Psoas muscle (tissue), 8 donors: ENCODE measurements at regions of chr4 and their contacts with region 1.

Region 1: DNA sequence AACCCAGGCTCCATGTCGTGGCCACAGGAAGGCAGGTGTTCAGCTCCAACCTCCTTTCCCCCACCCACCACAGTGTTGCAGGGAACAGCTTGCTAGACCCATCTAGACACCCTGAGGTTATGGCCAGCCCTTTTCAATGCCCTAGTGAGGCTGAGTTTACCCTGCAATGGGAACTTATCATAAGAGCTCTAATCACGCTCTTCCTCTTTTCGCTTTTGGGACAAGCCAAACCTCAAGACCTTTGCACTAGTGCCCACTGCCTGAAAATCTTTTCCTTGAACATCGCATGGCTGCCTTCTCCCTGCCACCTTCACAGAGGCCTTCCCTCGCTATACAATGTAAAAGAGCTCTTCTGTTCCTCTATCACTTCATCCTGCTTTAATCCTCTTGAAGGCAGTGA is 2.4 kb upstream of the FGFBP2 start:
- DNase-seq: no peak
- ATAC-seq: no peak
- H3K4me3 ChIP-seq: no peak overlapping the region
- H3K27ac ChIP-seq: no peak overlapping the region
- H3K4me1 ChIP-seq: peaks cover 9% of the 10 kb centered on the region
- H3K27me3 ChIP-seq: no peaks in the 10 kb centered on the region
- CTCF ChIP-seq: no peak

Region 2: GRCh38 chr4:14289708-14290107 is 1675.6 kb before region 1 on chr4:
- intact Hi-C with region 1: no loop called
- DNase-seq: no peak
- ATAC-seq: no peak
- H3K4me3 ChIP-seq: no peak overlapping the region
- H3K27ac ChIP-seq: no peak overlapping the region
- H3K4me1 ChIP-seq: no peaks in the 10 kb centered on the region
- H3K27me3 ChIP-seq: no peaks in the 10 kb centered on the region
- CTCF ChIP-seq: no peak

Region 3: GRCh38 chr4:15920723-15921591 is 44.4 kb before region 1 on chr4:
- intact Hi-C with region 1: no loop called
- DNase-seq: peak in 1 of 2 donors; percentile 72
- ATAC-seq: peak; percentile 32 to 78 (median 68)
- H3K4me3 ChIP-seq: no peak overlapping the region
- H3K27ac ChIP-seq: no peak overlapping the region
- H3K4me1 ChIP-seq: no peaks in the 10 kb centered on the region
- H3K27me3 ChIP-seq: peaks cover 0 to 4% (median 0%) of the 10 kb centered on the region in 3 donors
- CTCF ChIP-seq: no peak

Region 4: GRCh38 chr4:16026160-16026761 is 60.9 kb after region 1 on chr4:
- intact Hi-C with region 1: no loop called
- DNase-seq: no peak
- ATAC-seq: peak in 1 of 4 donors; percentile 71
- H3K4me3 ChIP-seq: no peak overlapping the region
- H3K27ac ChIP-seq: no peak overlapping the region
- H3K4me1 ChIP-seq: no peaks in the 10 kb centered on the region
- H3K27me3 ChIP-seq: peaks cover 0 to 2% (median 0%) of the 10 kb centered on the region in 3 donors
- CTCF ChIP-seq: peak; percentile 93

Region 5: DNA sequence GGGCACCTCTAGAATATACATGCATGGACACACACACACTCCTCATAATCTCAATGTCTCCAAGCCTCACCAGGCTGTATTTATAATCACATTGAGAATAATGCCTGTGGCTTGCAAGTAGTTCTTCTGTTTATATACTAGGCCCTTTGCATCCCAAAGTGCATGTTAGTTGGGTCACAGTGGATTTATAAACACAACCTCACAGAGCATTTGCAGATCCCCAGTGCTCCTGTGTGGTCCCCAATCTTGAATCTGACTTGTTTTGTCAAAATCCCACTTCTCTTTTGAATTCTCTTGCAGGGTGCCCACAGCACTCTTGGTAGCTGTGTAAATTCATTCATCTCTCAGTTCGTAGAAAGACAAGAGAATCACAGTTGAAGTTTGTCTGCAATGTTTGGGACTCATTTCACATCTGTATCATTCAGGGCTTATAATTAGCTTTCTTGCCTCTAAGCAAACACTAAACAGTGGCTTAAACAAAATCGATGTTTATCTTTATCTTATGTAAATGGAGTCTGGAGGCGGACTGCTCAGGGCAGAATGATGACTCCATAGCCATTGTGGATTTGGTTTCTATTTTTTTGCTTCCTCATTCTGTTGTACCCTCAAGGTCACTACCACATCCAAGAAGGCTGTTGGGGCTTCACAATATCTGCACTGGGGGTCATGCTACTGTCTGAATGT is 168.2 kb after region 1 on chr4:
- intact Hi-C with region 1: loop called in 1 of 2 experiments (anchors 5 kb)
- DNase-seq: no peak
- ATAC-seq: no peak
- H3K4me3 ChIP-seq: no peak overlapping the region
- H3K27ac ChIP-seq: no peak overlapping the region
- H3K4me1 ChIP-seq: no peaks in the 10 kb centered on the region
- H3K27me3 ChIP-seq: no peaks in the 10 kb centered on the region
- CTCF ChIP-seq: no peak

Region 6: DNA sequence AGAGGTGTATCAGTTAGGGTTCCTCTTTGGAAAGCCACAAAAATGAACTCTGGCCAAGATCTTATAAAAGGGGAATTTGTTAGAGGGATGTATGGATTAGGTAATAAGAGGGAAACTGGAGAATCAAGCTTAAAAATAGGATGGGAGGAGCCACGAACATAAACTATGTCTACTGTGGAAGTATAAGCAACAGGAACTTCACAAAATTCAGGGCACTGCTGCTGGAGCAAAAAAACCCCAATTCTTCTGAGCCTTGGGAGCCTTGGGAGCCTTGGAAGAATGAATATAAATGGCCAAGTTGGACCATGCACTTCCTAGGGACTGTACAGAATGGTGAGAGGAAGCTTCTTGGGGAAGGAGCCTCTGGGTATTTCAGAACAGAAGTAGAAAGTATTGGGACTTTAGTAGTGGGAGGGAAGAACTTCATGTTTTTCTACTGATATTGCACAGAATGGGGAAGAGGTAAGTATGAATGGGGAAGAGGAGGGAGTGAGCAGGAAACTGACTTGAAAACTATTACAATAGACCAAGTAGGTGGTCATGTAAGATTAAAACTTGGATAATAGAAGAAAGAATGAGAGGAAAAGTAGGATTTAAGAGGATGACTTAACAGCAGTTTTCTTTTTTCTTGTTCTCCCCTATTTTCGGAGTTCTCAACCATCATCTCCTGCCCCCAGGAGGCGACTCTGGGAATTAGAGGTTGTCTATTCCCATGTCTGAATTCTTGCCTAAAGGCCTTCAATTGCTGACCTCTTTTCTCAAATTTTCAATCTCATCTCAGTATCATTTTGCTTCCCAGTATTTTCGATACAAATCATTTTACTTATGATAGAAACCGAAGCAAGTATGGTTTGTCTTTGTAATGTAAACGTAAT is 305.4 kb after region 1 on chr4:
- intact Hi-C with region 1: no loop called
- DNase-seq: no peak
- ATAC-seq: no peak
- H3K4me3 ChIP-seq: no peak overlapping the region
- H3K27ac ChIP-seq: no peak overlapping the region
- H3K4me1 ChIP-seq: no peaks in the 10 kb centered on the region
- H3K27me3 ChIP-seq: no peaks in the 10 kb centered on the region
- CTCF ChIP-seq: no peak